IMR-90 (cell line): ENCODE measurements at regions of chrX and their contacts with region 1.

Region 1: GRCh38 chrX:136168929-136169735 is 21.8 kb downstream of the FHL1 start:
- DNase-seq: peak; percentile 97
- ATAC-seq: peak; percentile 72
- H3K4me3 ChIP-seq: no peak overlapping the region
- H3K27ac ChIP-seq: peak overlapping the region; percentile 93
- H3K4me1 ChIP-seq: peaks cover 16% of the 10 kb centered on the region
- H3K27me3 ChIP-seq: no peaks in the 10 kb centered on the region
- CTCF ChIP-seq: peak; percentile 13; the same call in 1 of the 2 replicates
- POLR2A ChIP-seq: no peak
- RAD21 ChIP-seq: no peak

Region 2: GRCh38 chrX:136203438-136203837 is 34.3 kb after region 1 on chrX:
- CTCF ChIA-PET with region 1: interaction called, 5 read pairs
- POLR2A ChIA-PET with region 1: no interaction called
- dilution Hi-C with region 1: no loop called
- in situ Hi-C with region 1: no loop called
- intact Hi-C with region 1: loop called (anchors 2 kb)
- DNase-seq: no peak
- ATAC-seq: no peak
- H3K4me3 ChIP-seq: no peak overlapping the region
- H3K27ac ChIP-seq: no peak overlapping the region
- H3K4me1 ChIP-seq: peaks cover 11% of the 10 kb centered on the region
- H3K27me3 ChIP-seq: peaks cover 1% of the 10 kb centered on the region; the same call in 1 of the 2 replicates
- CTCF ChIP-seq: no peak
- POLR2A ChIP-seq: no peak
- RAD21 ChIP-seq: no peak

Region 3: GRCh38 chrX:136209016-136209738 is 40.0 kb after region 1 on chrX:
- CTCF ChIA-PET with region 1: interaction called, 5 read pairs
- POLR2A ChIA-PET with region 1: interaction called, 4 read pairs
- dilution Hi-C with region 1: no loop called
- in situ Hi-C with region 1: no loop called
- intact Hi-C with region 1: loop called (anchors 1 kb)
- DNase-seq: peak; percentile 56
- ATAC-seq: peak; percentile 59
- H3K4me3 ChIP-seq: no peak overlapping the region
- H3K27ac ChIP-seq: peak overlapping the region; percentile 5; the same call in 1 of the 2 replicates
- H3K4me1 ChIP-seq: peaks cover 6% of the 10 kb centered on the region
- H3K27me3 ChIP-seq: no peaks in the 10 kb centered on the region; the same call in 1 of the 2 replicates
- CTCF ChIP-seq: peak; percentile 64
- POLR2A ChIP-seq: no peak
- RAD21 ChIP-seq: peak; percentile 78

Region 4: DNA sequence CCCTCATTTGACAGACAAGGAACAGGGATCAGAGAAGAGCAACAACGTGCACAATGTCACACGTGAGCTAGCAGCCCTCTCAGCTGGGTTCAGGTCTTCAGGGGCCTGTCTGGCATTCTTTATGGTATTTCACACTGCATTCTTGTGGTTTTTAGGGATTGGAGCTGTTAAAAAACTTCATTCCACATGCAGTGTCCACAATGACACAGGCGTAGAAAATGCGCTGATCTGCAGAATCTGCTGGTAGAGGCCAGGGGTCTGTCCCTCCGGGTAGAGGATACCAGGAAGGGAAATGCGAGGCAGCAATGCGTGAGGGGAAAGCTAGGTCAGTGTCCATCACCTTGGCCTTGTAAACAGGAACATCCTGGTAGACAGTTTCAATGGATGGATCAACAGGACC is 45.4 kb after region 1 on chrX:
- CTCF ChIA-PET with region 1: no interaction called
- POLR2A ChIA-PET with region 1: no interaction called
- dilution Hi-C with region 1: no loop called
- in situ Hi-C with region 1: no loop called
- intact Hi-C with region 1: loop called (anchors 1 kb)
- DNase-seq: peak; percentile 75
- ATAC-seq: peak; percentile 83
- H3K4me3 ChIP-seq: no peak overlapping the region
- H3K27ac ChIP-seq: peak overlapping the region; percentile 67; the same call in 1 of the 2 replicates
- H3K4me1 ChIP-seq: peaks cover 10% of the 10 kb centered on the region
- H3K27me3 ChIP-seq: no peaks in the 10 kb centered on the region; the same call in 1 of the 2 replicates
- CTCF ChIP-seq: no peak
- POLR2A ChIP-seq: no peak
- RAD21 ChIP-seq: no peak

Region 5: DNA sequence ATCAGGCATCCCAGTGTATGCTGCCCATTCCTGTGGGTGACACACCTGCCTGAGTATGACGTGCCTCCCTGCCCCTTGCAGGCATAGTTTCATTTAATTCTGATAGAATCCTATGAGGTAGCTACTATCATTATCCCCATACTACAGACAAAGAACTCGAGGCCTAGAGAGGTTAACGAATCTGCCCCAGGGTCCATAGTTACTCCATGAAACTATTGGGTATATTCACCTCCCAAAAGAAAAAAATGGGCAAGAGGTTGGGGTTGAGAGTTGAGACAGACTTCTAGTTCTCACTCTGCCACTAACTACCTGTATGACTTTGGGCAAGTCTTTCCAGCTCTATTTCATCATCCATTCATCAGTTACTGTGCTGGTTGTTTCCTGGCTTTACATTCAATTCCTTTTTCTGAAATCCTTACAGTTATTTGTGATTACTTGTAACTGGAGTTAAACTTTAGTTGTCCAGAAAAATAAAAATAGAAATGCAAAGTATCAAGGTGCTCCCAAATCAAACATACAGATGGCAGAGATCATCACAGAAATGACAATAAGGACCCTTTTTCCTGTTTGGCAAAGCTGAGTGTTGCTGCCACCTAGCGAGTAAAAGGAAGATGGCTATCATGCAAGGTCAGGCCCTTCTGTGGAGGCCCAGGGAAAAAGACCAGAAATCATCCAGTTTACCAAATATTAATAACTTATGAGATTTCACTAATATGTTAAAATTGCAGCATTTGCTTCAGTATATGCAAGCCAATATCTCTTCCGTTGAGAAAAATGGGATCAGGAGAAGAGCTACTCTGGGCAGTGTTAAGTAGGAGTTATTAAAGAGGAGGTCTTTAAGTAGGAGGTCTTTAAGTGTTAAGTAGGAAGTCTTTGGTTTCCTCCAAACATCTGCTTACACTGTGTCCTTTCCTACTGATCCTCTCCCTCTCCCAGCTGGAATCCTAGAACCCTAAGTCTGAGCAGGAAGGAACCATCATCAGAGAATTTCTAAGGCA is 99.2 kb after region 1 on chrX:
- CTCF ChIA-PET with region 1: no interaction called
- POLR2A ChIA-PET with region 1: no interaction called
- dilution Hi-C with region 1: no loop called
- in situ Hi-C with region 1: no loop called
- intact Hi-C with region 1: loop called (anchors 2 kb)
- DNase-seq: peak; percentile 50
- ATAC-seq: peak; percentile 76
- H3K4me3 ChIP-seq: no peak overlapping the region
- H3K27ac ChIP-seq: no peak overlapping the region
- H3K4me1 ChIP-seq: 0 out of 2 replicates have a peak, but pooled peaks cover 3% of the 10 kb centered on the region
- H3K27me3 ChIP-seq: no peaks in the 10 kb centered on the region
- CTCF ChIP-seq: peak; percentile 76
- POLR2A ChIP-seq: no peak
- RAD21 ChIP-seq: peak; percentile 84